H1 (cell line): ENCODE measurements at regions of chr9 and their contacts with region 1.

Region 1: DNA sequence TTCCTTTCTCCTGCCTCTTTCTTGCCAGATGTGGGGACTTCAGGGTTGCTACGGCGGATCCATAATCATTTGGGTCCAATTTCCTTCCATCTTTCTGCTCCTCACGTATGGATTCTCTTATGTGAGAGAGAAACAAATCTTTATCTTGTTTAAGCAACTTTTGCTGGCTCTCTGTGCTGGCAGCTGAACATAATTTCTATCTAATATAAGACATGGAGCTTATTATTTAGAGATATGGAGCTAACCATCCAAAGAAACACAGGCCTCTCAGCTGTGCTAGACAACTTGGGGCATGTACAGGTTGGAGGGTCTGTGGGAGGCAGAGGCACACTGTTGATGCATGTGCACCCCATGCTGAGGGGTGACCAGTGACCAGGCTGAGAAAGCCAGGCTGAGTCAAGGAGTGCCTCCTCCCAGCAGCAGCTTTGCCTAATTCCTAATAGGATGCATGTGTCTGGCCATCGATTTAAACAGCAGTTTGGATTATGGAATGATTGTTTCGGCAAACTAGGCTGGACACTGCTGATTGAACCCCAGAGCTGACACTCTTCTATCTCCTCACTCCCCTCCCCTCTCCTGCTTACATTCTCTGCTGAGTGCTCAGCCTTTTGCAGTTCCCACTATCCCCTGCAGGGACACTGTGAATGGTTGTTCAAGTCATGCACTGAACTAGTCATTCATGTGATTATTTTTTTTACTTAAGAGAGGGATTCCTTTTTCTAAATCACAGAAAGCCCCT is 195.8 kb downstream of the ERCC6L2 start:
- DNase-seq: peak in 1 of 2 experiments; percentile 60
- H3K4me3 ChIP-seq: no peak overlapping the region
- H3K27ac ChIP-seq: no peak overlapping the region
- H3K4me1 ChIP-seq: peaks cover 0 to 3% (median 1%) of the 10 kb centered on the region in 4 experiments; a peak in 6 of 7 replicates
- H3K27me3 ChIP-seq: no peaks in the 10 kb centered on the region
- CTCF ChIP-seq: peak; percentile 27 to 65 (median 27); a peak in 3 of 4 replicates
- EP300 ChIP-seq: no peak
- POLR2A ChIP-seq: no peak
- RAD21 ChIP-seq: peak; percentile 5 to 44; a peak in 1 of 4 replicates

Region 2: GRCh38 chr9:96084331-96084734 is 13.1 kb after region 1 on chr9:
- CTCF ChIA-PET with region 1: interaction called, 22 read pairs
- POLR2A ChIA-PET with region 1: no interaction called
- DNase-seq: no peak
- H3K4me3 ChIP-seq: no peak overlapping the region
- H3K27ac ChIP-seq: no peak overlapping the region
- H3K4me1 ChIP-seq: peaks cover 4 to 13% (median 10%) of the 10 kb centered on the region in 4 experiments
- H3K27me3 ChIP-seq: no peaks in the 10 kb centered on the region
- CTCF ChIP-seq: no peak
- EP300 ChIP-seq: no peak
- POLR2A ChIP-seq: no peak
- RAD21 ChIP-seq: no peak